Endothelial cell of umbilical vein (primary cell): ENCODE measurements at regions of chr11 and their contacts with region 1.

Region 1: DNA sequence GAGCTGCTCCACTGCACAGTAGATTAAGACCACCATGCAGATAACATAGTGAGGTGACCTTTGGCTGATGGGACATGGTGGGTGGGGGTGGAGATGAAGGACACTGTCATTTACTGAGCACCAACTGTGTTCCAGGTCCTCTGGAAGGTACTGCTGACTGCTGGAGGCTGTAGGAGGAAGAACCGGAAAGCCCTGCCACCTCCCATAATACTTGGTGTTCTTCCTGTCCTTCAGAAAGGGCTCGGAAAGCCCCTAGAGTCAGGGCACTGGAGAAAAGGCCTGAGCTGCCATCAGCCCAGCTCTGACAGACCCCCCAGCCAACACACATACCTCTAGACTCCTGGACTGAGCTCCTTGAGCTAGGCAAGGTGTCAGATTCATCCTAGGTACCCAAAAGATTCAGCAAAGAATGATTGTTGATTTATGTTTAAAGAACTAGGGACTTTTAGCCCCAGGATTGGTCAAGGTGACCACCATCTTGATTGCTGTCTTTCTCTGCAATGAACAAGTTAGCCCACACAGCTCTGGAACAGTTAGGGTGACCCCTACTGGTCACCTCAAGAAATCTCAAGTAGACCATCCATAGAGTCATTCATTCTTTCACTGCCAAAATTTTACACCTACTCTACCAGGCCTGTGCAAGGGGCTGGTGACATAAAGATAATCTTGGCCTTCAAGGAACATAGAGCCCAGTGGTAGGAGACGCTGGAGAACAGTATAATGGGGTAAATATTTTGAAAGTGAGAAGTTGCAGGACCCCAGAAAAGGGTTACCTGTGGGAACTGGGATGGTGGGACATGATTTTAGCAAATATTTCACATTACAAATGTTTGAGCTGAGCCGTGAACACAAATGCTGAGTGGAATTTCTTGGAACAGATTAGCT is 39.4 kb downstream of the IRAG1 start:
- DNase-seq: peak; percentile 73
- H3K4me3 ChIP-seq: no peak overlapping the region
- H3K27ac ChIP-seq: no peak overlapping the region
- H3K4me1 ChIP-seq: peaks cover 21% of the 10 kb centered on the region
- H3K27me3 ChIP-seq: no peaks in the 10 kb centered on the region
- CTCF ChIP-seq: peak; percentile 72 to 78
- POLR2A ChIP-seq: no peak

Region 2: GRCh38 chr11:10405855-10406592 is 248.1 kb before region 1 on chr11:
- CTCF ChIA-PET with region 1: interaction called, 25 read pairs
- POLR2A ChIA-PET with region 1: no interaction called
- dilution Hi-C with region 1: no loop called
- intact Hi-C with region 1: loop called (anchors 1 kb)
- DNase-seq: peak; percentile 89
- H3K4me3 ChIP-seq: no peak overlapping the region
- H3K27ac ChIP-seq: no peak overlapping the region
- H3K4me1 ChIP-seq: peaks cover 26% of the 10 kb centered on the region
- H3K27me3 ChIP-seq: no peaks in the 10 kb centered on the region
- CTCF ChIP-seq: peak; percentile 56 to 73
- POLR2A ChIP-seq: no peak

Region 3: DNA sequence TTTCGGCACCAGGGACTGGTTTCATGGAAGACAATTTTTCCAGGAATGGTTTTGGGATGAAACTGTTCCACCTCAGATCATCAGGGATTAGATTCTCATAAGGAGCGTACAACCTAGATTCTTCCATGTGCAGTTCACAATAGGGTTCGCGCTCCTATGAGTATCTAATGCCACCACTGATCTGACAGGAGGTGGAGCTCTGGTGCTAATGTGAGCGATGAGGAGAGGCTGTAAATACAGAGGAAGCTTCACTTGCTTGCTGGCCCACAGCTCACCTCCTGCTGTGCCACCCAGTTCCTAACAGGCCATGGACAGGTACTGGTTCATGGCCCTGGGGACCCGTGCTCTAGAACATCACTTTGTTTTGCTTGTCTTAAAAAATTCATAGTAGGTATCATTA is 240.9 kb before region 1 on chr11:
- CTCF ChIA-PET with region 1: interaction called, 12 read pairs
- POLR2A ChIA-PET with region 1: no interaction called
- dilution Hi-C with region 1: no loop called
- intact Hi-C with region 1: loop called (anchors 1 kb)
- DNase-seq: peak; percentile 20
- H3K4me3 ChIP-seq: no peak overlapping the region
- H3K27ac ChIP-seq: no peak overlapping the region
- H3K4me1 ChIP-seq: peaks cover 13% of the 10 kb centered on the region
- H3K27me3 ChIP-seq: peaks cover 2 to 5% of the 10 kb centered on the region in 2 experiments
- CTCF ChIP-seq: peak in 1 of 2 donors; percentile 16
- POLR2A ChIP-seq: no peak

Region 4: GRCh38 chr11:10514210-10514609 is 140.0 kb before region 1 on chr11:
- CTCF ChIA-PET with region 1: interaction called, 45 read pairs
- POLR2A ChIA-PET with region 1: no interaction called
- dilution Hi-C with region 1: no loop called
- intact Hi-C with region 1: loop called (anchors 1 kb)
- DNase-seq: peak; percentile 52
- H3K4me3 ChIP-seq: no peak overlapping the region
- H3K27ac ChIP-seq: no peak overlapping the region
- H3K4me1 ChIP-seq: peaks cover 7% of the 10 kb centered on the region
- H3K27me3 ChIP-seq: no peaks in the 10 kb centered on the region
- CTCF ChIP-seq: peak; percentile 5 to 10
- POLR2A ChIP-seq: no peak

Region 5: GRCh38 chr11:10564696-10565318 is 89.4 kb before region 1 on chr11:
- CTCF ChIA-PET with region 1: interaction called, 35 read pairs
- POLR2A ChIA-PET with region 1: no interaction called
- dilution Hi-C with region 1: no loop called
- intact Hi-C with region 1: loop called (anchors 1 kb)
- DNase-seq: peak; percentile 49
- H3K4me3 ChIP-seq: no peak overlapping the region
- H3K27ac ChIP-seq: no peak overlapping the region
- H3K4me1 ChIP-seq: peaks cover 7% of the 10 kb centered on the region
- H3K27me3 ChIP-seq: no peaks in the 10 kb centered on the region
- CTCF ChIP-seq: peak; percentile 8 to 51
- POLR2A ChIP-seq: no peak